Heart right ventricle (tissue), 16 donors: ENCODE measurements at regions of chr1 and their contacts with region 1.

Region 1: GRCh38 chr1:22275721-22276395 is 133.0 kb upstream of the WNT4 start:
- DNase-seq: peak; percentile 9 to 42
- ATAC-seq: peak in 5 of 8 donors; percentile 52 to 82 (median 67)
- H3K4me3 ChIP-seq: no peak overlapping the region
- H3K27ac ChIP-seq: no peak overlapping the region
- H3K4me1 ChIP-seq: no peaks in the 10 kb centered on the region
- H3K27me3 ChIP-seq: peaks cover 0 to 39% (median 30%) of the 10 kb centered on the region in 7 donors
- CTCF ChIP-seq: peak; percentile 38 to 84 (median 73)

Region 2: GRCh38 chr1:22105611-22106207 is 170.1 kb before region 1 on chr1:
- intact Hi-C with region 1: loop called in 8 of 10 experiments (anchors 2 to 10 kb)
- DNase-seq: no peak
- ATAC-seq: peak in 5 of 8 donors; percentile 24 to 41 (median 33)
- H3K4me3 ChIP-seq: no peak overlapping the region
- H3K27ac ChIP-seq: no peak overlapping the region
- H3K4me1 ChIP-seq: peaks cover 0 to 49% (median 20%) of the 10 kb centered on the region in 9 donors
- H3K27me3 ChIP-seq: no peaks in the 10 kb centered on the region
- CTCF ChIP-seq: peak; percentile 64 to 86 (median 75)

Region 3: DNA sequence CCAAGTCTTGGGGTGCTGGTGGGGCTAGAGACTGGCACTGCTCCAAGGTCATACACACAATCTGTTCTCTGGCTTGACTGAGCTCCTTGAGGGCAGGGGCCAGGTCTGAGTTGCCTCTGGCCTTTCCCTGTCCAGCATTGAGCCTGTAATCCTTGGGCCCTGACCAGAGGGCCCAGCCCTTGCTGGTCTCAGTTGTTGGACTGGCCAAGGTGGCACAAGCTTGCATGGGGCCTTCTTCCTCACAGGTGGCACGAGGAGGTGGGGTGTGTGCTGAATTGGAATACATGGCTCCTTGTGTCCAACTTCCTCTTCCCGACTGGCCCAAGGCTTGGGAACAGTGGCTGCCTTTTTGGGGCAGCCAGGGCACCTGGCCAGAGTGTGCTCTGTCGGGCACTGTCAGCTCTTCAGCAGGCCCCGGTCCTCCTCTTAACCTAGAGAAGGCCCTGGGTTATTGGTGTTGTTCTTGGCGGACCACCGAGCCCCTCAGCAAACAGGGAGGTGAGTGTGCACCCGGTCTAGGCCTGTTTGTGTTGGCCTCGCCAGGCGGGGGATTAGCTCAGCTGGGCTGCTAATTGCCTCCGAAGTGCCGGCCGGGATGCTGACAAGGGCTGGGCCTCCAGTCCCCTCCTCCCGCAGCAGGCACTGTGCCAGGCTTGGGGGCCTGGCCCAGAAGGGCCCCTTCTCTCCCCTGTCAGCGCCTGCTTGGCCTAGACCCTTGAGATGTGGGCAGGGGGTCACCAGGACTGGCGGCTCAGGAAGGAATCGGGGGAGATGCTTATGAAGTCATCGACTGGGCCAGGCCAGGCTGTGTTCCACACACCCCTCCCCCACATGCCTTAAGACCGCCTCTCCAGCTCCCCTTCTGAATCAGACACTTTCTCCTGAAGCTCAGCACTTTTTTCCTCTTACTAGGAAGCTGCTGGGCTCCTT is 161.5 kb before region 1 on chr1:
- intact Hi-C with region 1: loop called in 7 of 10 experiments (anchors 5 to 10 kb)
- DNase-seq: peak in 1 of 2 donors; percentile 39
- ATAC-seq: peak in 7 of 8 donors; percentile 17 to 57 (median 39)
- H3K4me3 ChIP-seq: no peak overlapping the region
- H3K27ac ChIP-seq: peak overlapping the region in 4 of 10 donors; percentile 1 to 48 (median 38)
- H3K4me1 ChIP-seq: peaks cover 9 to 73% (median 44%) of the 10 kb centered on the region in 9 donors
- H3K27me3 ChIP-seq: no peaks in the 10 kb centered on the region
- CTCF ChIP-seq: no peak

Region 4: DNA sequence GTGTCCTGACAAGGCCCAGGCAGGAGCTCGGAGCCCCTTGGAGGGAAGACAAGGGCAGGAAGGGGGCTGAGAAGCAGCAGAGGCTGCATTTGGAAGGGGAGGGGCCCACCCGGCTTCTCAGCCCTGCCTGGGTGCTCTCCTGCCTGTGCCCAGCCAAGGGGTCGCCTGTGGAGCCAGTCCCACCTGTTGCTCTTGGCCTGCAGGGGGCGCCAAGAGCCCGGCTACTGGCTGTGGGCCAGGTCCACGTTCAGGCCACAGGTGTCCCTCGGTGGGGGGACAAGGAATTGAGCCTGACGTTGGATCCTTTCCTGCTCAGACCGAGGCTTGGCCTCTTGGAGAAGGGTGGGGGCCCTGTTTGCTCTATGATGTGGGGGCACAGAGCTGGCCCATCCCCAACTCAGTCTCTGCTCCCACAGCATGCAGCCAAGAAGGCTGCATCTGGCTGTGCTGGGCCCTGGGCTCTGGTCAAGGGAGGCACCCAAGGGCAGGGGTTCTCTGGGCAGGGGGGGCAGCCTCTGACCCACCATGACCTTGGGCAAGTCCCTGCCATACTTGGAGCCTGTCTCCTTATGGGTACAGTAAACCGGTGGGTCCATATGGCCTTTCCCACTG is 143.9 kb before region 1 on chr1:
- intact Hi-C with region 1: loop called in 1 of 10 experiments (anchors 10 kb)
- DNase-seq: no peak
- ATAC-seq: peak in 3 of 8 donors; percentile 31 to 36 (median 35)
- H3K4me3 ChIP-seq: no peak overlapping the region
- H3K27ac ChIP-seq: no peak overlapping the region
- H3K4me1 ChIP-seq: peaks cover 0 to 8% (median 4%) of the 10 kb centered on the region in 9 donors
- H3K27me3 ChIP-seq: peaks cover 0 to 37% (median 10%) of the 10 kb centered on the region in 7 donors
- CTCF ChIP-seq: peak; percentile 18 to 79 (median 67)

Region 5: DNA sequence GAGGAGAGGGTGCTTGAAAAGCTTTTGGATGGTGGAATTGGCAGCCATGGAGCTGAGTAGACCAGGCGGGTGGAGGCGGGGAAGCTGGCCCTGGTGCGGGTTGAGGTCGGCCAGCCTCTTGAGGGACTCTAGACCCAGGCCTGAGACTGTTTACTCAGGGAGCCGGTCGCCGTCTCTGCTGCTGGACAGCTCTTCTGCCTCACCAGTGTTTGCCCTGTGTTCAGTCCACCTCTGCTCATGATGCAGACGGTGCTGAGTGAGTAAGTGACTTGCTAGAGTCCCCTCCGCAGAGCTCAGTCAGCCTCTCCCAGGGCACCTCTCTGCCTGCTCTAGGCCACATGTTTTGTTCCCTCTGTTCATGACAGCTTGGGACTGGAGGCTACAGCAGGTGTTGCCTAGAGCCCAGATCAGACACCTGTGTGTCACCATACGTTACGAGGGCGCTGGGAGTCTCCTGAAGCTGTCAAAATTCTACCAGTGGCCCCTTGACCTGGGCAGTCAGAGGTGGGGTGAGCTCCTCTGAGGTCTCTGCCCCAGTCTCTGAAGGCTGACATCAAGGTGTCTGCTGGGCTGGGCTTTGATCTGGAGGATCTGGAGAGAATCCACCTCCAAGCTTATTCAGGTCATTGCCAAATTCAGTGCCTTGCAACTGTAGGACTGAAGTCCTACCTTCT is 59.5 kb before region 1 on chr1:
- intact Hi-C with region 1: no loop called
- DNase-seq: no peak
- ATAC-seq: no peak
- H3K4me3 ChIP-seq: no peak overlapping the region
- H3K27ac ChIP-seq: no peak overlapping the region
- H3K4me1 ChIP-seq: no peaks in the 10 kb centered on the region
- H3K27me3 ChIP-seq: peaks cover under 1 to 68% (median 49%) of the 10 kb centered on the region in 7 donors
- CTCF ChIP-seq: no peak

Region 6: DNA sequence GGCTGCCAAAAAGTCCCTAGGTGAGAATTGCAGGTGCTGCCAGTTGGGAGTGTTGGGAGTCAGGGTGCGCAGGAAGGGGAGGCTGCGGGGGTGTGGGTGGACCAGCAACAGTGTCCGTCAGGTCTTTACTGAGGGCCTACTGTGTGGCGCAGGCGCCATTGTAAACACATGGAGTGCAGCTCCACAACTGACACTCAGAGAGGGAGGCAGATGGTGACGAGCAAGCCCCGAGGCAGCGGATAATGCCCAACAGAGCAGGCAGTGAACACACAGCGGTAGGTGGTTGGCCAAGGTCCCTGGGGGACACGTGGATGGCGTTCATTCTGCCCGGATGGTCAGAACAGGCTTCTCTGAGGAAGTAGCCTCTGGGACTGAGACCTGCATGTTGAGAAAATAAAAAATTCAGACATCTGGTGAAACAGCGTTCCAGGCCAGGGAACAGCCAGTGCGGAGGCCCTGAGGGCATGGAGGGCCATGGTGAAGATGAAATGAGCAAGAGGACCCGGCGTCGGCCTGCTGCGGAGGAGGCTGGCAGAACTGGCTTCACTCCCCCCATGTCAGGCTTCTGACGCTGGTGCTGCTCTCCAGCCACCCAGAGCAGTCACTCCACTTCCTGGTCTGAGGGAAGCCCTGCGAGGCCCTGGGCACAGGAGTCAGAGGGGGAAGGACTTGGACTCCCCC is 39.7 kb after region 1 on chr1:
- intact Hi-C with region 1: no loop called
- DNase-seq: no peak
- ATAC-seq: no peak
- H3K4me3 ChIP-seq: no peak overlapping the region
- H3K27ac ChIP-seq: no peak overlapping the region
- H3K4me1 ChIP-seq: no peaks in the 10 kb centered on the region
- H3K27me3 ChIP-seq: peaks cover 0 to 63% (median 43%) of the 10 kb centered on the region in 7 donors
- CTCF ChIP-seq: no peak

Region 7: GRCh38 chr1:22426781-22427180 is 150.9 kb after region 1 on chr1:
- intact Hi-C with region 1: no loop called
- DNase-seq: no peak
- ATAC-seq: no peak
- H3K4me3 ChIP-seq: no peak overlapping the region
- H3K27ac ChIP-seq: no peak overlapping the region
- H3K4me1 ChIP-seq: no peaks in the 10 kb centered on the region
- H3K27me3 ChIP-seq: peaks cover 0 to 6% (median 0%) of the 10 kb centered on the region in 7 donors
- CTCF ChIP-seq: no peak